ENCODE measurements at regions of chr4 and their contacts with region 1.

Region 1: GRCh38 chr4:4289941-4290850 is at the starts of genes LYAR and ZBTB49:
- DNase-seq: peak; percentile 95 to 98 (median 97)
- ATAC-seq: peak; percentile 92
- H3K4me3 ChIP-seq: peak within 1 kb of the TSS; percentile 88 to 89
- H3K4me3 Mint-ChIP-seq: peak within 1 kb of the TSS; percentile 97
- H3K27ac ChIP-seq: peak within 1 kb of the TSS; percentile 74 to 77
- H3K27ac Mint-ChIP-seq: peak within 1 kb of the TSS; percentile 96
- H3K4me1 ChIP-seq: peaks cover 31% of the 10 kb centered on the region
- H3K4me1 Mint-ChIP-seq: peaks cover 75% of the 10 kb centered on the region
- H3K27me3 ChIP-seq: no peaks in the 10 kb centered on the region
- H3K27me3 Mint-ChIP-seq: no peaks in the 10 kb centered on the region
- CTCF ChIP-seq: no peak
- total RNA-seq, gene LYAR: 57.8 to 59.0 TPM
- total RNA-seq, gene ZBTB49: 15.9 to 21.1 TPM

Region 2: DNA sequence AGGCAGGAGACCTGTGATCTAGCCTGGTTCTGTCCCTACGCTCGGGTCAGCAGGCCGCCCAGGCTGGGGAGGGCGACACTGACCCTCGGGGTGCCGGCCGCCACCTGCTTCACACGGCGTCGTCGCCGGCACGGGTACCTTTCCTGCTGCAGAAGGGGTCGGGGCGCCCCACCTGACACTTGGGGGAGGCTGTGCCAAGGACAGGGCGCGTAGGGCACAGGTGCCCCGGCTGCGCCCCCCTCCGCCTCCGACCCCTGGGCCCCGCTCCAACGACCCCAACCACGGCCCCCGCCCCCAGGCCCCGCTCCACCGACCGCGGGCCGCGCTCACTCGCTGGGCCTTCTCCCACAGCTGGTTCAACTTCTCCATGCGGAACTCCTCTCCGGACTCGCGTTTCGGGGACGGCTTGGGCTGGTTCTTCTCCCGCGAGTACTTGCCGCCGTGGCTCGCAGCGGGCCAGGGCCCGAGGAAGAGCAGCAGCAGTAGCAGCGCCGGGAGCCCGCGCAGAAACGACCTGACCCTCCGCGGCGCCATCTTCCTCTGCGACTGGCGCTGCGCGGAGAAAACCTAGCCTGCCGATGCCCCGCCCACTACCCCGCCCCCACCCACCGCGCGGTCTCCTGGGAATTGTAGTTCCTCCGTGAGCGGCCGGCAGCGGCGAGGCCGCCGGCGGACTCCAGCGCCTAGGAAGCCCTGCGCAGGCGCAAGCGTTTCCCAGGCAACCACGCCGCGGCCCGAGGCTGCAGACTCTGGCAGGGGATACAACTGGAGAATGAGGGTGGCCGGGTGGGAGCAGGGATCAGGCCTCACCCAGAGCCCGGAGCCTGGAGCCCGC is 758.1 kb before region 1 on chr4 and contains the start of gene LRPAP1:
- CTCF ChIA-PET with region 1: no interaction called
- POLR2A ChIA-PET with region 1: no interaction called
- intact Hi-C with region 1: loop called in 1 of 2 experiments (anchors 5 kb)
- DNase-seq: peak; percentile 63 to 92 (median 86)
- ATAC-seq: peak; percentile 94
- H3K4me3 ChIP-seq: peak within 1 kb of the TSS; percentile 90 to 93
- H3K4me3 Mint-ChIP-seq: peak within 1 kb of the TSS; percentile 98
- H3K27ac ChIP-seq: peak within 1 kb of the TSS; percentile 58 to 76
- H3K27ac Mint-ChIP-seq: peak within 1 kb of the TSS; percentile 96
- H3K4me1 ChIP-seq: peaks cover 35% of the 10 kb centered on the region
- H3K4me1 Mint-ChIP-seq: peaks cover 39% of the 10 kb centered on the region
- H3K27me3 ChIP-seq: no peaks in the 10 kb centered on the region
- H3K27me3 Mint-ChIP-seq: no peaks in the 10 kb centered on the region
- CTCF ChIP-seq: no peak
- total RNA-seq, gene LRPAP1: 94.6 to 97.4 TPM

Region 3: GRCh38 chr4:4269856-4270255 is 20.3 kb before region 1 on chr4:
- CTCF ChIA-PET with region 1: interaction called, 5 read pairs
- POLR2A ChIA-PET with region 1: interaction called, 12 read pairs
- intact Hi-C with region 1: loop called (anchors 1 to 2 kb)
- DNase-seq: peak in 6 of 9 experiments; percentile 39 to 81 (median 70)
- ATAC-seq: peak; percentile 77
- H3K4me3 ChIP-seq: no peak overlapping the region
- H3K4me3 Mint-ChIP-seq: peak overlapping the region; percentile 77
- H3K27ac ChIP-seq: peak overlapping the region; percentile 81 to 90
- H3K27ac Mint-ChIP-seq: peak overlapping the region; percentile 95
- H3K4me1 ChIP-seq: peaks cover 22% of the 10 kb centered on the region
- H3K4me1 Mint-ChIP-seq: peaks cover 52% of the 10 kb centered on the region
- H3K27me3 ChIP-seq: no peaks in the 10 kb centered on the region
- H3K27me3 Mint-ChIP-seq: no peaks in the 10 kb centered on the region
- CTCF ChIP-seq: no peak

Region 4: DNA sequence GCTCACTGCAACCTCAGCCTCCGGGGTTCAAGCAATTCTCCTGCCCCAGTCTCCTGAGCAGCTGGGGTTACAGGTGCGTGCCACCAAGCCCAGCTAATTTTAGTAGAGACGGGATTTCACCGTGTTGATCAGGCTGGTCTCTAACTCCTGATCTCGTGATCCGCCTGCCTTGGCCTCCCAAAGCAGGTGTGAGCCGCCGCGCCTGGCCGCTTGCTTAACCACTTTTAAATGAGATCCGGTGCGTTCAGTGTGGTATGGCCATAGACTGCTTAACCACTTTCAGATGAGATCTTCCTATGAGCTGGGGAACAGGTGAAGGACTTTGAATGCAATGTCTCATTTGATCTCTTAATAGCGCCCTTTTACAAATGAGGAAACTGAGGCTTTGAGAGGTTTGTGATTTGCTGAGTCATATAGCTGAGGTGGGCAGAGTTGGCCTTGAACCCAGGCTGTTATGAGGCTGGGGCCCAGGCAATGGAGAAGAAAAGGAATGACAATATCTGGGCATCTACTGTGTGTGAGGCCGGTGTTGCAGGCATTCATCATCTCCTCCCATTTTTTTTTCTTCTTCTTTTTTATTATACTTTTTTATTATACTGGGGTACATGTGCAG is 54.8 kb after region 1 on chr4:
- CTCF ChIA-PET with region 1: no interaction called
- POLR2A ChIA-PET with region 1: no interaction called
- intact Hi-C with region 1: loop called in 1 of 2 experiments (anchors 1 kb)
- DNase-seq: peak in 1 of 9 experiments; percentile 11
- ATAC-seq: no peak
- H3K4me3 ChIP-seq: no peak overlapping the region
- H3K4me3 Mint-ChIP-seq: no peak overlapping the region
- H3K27ac ChIP-seq: no peak overlapping the region
- H3K27ac Mint-ChIP-seq: no peak overlapping the region
- H3K4me1 ChIP-seq: peaks cover 38% of the 10 kb centered on the region
- H3K4me1 Mint-ChIP-seq: peaks cover 61% of the 10 kb centered on the region
- H3K27me3 ChIP-seq: no peaks in the 10 kb centered on the region
- H3K27me3 Mint-ChIP-seq: no peaks in the 10 kb centered on the region
- CTCF ChIP-seq: no peak

Region 5: GRCh38 chr4:4541661-4542570 is 251.7 kb after region 1 on chr4 and contains the start of gene STX18:
- CTCF ChIA-PET with region 1: no interaction called
- POLR2A ChIA-PET with region 1: no interaction called
- intact Hi-C with region 1: loop called (anchors 1 to 2 kb)
- DNase-seq: peak; percentile 81 to 95 (median 88)
- ATAC-seq: peak; percentile 95
- H3K4me3 ChIP-seq: peak within 1 kb of the TSS; percentile 91 to 93
- H3K4me3 Mint-ChIP-seq: peak within 1 kb of the TSS; percentile 95
- H3K27ac ChIP-seq: peak within 1 kb of the TSS; percentile 68 to 86
- H3K27ac Mint-ChIP-seq: peak within 1 kb of the TSS; percentile 95
- H3K4me1 ChIP-seq: peaks cover 28% of the 10 kb centered on the region
- H3K4me1 Mint-ChIP-seq: peaks cover 63% of the 10 kb centered on the region
- H3K27me3 ChIP-seq: no peaks in the 10 kb centered on the region
- H3K27me3 Mint-ChIP-seq: no peaks in the 10 kb centered on the region
- CTCF ChIP-seq: no peak
- total RNA-seq, gene STX18: 12.6 to 15.6 TPM

Measured in CD8-positive, alpha-beta T cell (primary cell).